ENCODE measurements at regions of chr2 and their contacts with region 1.

Region 1: DNA sequence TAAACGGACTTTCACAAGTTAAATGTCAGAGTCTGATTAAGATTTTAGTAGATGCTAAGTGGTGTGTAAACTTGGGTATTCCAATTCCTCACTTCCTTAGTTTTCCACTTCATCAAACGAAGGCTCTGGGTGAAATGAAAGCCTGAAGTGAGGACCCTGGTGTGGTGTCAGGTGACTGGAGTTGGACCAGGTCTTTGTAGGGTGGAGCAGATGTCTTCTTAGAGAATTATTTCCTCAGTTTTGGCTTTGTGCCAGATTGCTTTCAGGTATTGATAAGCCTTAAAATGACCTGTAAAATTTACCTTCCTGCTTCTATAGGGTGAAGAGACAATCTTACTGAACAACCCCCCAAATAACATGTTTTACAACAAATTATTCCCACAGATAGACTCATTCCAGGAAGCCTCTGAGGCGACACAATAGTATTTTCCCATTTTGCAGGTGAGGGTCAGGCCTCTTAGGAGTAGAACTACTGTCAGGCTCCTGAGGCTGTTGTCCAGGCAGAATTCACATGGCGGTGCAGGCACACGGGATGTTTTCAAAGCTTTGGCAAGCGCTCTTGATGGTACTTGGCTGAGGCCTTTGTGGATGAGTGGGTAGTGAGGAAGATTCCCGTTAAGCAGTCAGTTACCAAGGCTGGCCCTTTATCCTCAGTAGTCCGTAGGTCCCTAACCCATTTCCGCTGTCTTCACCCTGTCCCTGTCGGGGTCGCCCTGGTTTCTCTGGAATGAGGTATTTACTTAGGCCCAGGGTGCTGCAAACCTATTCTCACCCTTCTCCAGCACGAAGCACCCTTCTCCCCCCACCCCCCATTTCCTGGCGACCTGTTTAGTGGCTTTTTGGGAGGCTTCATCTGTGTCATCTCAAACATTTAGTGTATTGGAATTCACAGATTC is 6.6 kb downstream of the RPS7 start:
- DNase-seq: no peak
- H3K4me3 ChIP-seq: no peak overlapping the region
- H3K4me3 Mint-ChIP-seq: no peak overlapping the region
- H3K27ac ChIP-seq: no peak overlapping the region
- H3K27ac Mint-ChIP-seq: peak overlapping the region in 4 of 7 donors; percentile 28 to 75 (median 52)
- H3K4me1 ChIP-seq: peaks cover under 1 to 17% of the 10 kb centered on the region in 2 donors
- H3K4me1 Mint-ChIP-seq: peaks cover 18% of the 10 kb centered on the region
- H3K27me3 ChIP-seq: no peaks in the 10 kb centered on the region
- H3K27me3 Mint-ChIP-seq: no peaks in the 10 kb centered on the region
- CTCF ChIP-seq: no peak

Region 2: DNA sequence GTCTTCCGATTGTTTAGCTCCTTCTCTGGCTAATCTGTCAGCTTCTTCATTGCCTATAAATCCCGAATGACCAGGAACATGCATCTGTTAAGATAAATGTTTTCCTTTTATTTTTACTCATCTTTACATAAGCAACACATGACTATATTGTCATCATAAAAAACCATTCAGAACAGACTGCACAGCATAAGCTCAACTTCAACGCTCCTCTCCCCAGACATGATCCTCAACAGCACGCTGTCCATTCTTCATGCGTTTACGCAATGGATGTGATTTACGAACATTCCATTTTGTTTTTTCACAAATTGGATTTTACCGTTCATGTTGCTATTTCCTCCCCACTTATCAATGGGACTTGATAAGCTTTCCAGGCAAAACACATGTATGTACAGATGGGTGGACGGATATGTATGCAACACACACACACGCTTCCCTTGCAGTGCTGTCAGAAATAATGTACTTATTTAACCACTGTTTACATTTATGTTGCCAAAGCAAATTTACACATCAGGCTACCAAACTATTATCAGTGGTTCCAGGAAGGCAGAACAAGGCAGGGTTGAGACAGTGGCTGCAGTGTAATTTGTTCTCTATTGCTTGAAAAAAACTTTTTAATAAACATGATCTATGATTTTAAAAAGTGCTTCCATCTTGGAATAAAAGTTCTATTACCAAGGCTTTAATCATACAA is 35.7 kb before region 1 on chr2:
- intact Hi-C with region 1: loop called in 1 of 2 experiments (anchors 5 kb)
- DNase-seq: no peak
- H3K4me3 ChIP-seq: no peak overlapping the region
- H3K4me3 Mint-ChIP-seq: no peak overlapping the region
- H3K27ac ChIP-seq: no peak overlapping the region
- H3K27ac Mint-ChIP-seq: no peak overlapping the region
- H3K4me1 ChIP-seq: no peaks in the 10 kb centered on the region
- H3K4me1 Mint-ChIP-seq: no peaks in the 10 kb centered on the region
- H3K27me3 ChIP-seq: no peaks in the 10 kb centered on the region
- H3K27me3 Mint-ChIP-seq: no peaks in the 10 kb centered on the region
- CTCF ChIP-seq: no peak

Region 3: GRCh38 chr2:3594493-3595281 is 13.1 kb after region 1 on chr2 and contains the start of gene COLEC11:
- intact Hi-C with region 1: no loop called
- DNase-seq: no peak
- H3K4me3 ChIP-seq: no peak within 1 kb of the TSS
- H3K4me3 Mint-ChIP-seq: peak within 1 kb of the TSS in 1 of 2 donors; percentile 37
- H3K27ac ChIP-seq: no peak within 1 kb of the TSS
- H3K27ac Mint-ChIP-seq: no peak within 1 kb of the TSS
- H3K4me1 ChIP-seq: peaks cover 0 to 4% of the 10 kb centered on the region in 2 donors
- H3K4me1 Mint-ChIP-seq: peaks cover 7% of the 10 kb centered on the region
- H3K27me3 ChIP-seq: peaks cover 0 to 12% of the 10 kb centered on the region in 2 donors
- H3K27me3 Mint-ChIP-seq: peaks cover 13 to 25% (median 15%) of the 10 kb centered on the region in 3 donors
- CTCF ChIP-seq: no peak
- polyA plus RNA-seq, gene COLEC11: not detected

Region 4: GRCh38 chr2:3986063-3986462 is 404.4 kb after region 1 on chr2:
- intact Hi-C with region 1: no loop called
- DNase-seq: no peak
- H3K4me3 ChIP-seq: no peak overlapping the region
- H3K4me3 Mint-ChIP-seq: no peak overlapping the region
- H3K27ac ChIP-seq: no peak overlapping the region
- H3K27ac Mint-ChIP-seq: no peak overlapping the region
- H3K4me1 ChIP-seq: no peaks in the 10 kb centered on the region
- H3K4me1 Mint-ChIP-seq: no peaks in the 10 kb centered on the region
- H3K27me3 ChIP-seq: no peaks in the 10 kb centered on the region
- H3K27me3 Mint-ChIP-seq: peaks cover 0 to 2% (median 2%) of the 10 kb centered on the region in 3 donors
- CTCF ChIP-seq: no peak